Body of pancreas (tissue), 4 donors: ENCODE measurements at regions of chr12 and their contacts with region 1.

Region 1: DNA sequence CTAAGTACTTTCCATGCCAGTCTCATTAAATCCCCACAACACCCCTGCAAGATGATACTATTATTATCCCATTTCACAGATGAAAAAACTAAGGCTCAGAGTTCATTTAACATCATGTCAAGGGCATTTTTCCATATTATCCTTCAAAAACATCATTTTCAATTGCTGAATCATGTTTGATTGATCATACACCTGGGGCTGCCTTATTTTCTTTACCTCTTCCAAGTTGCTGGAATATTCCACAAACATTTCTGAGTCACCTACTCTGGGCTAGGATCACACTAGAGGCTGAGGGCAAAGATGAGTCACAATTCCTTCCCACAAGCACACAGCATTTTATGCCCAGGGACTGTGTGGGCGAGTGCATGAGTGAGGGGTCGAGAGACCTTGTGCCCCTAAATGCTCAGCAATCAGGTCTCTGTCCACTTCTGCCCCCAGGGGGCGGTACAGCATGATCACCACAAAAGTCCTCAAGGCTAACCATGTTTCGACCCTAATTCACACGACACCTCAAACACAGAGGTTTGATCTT is 14.1 kb upstream of the TMEM119 start:
- DNase-seq: no peak
- ATAC-seq: no peak
- H3K4me3 ChIP-seq: no peak overlapping the region
- H3K27ac ChIP-seq: no peak overlapping the region
- H3K4me1 ChIP-seq: no peaks in the 10 kb centered on the region
- H3K27me3 ChIP-seq: no peaks in the 10 kb centered on the region
- CTCF ChIP-seq: no peak
- POLR2A ChIP-seq: no peak

Region 2: DNA sequence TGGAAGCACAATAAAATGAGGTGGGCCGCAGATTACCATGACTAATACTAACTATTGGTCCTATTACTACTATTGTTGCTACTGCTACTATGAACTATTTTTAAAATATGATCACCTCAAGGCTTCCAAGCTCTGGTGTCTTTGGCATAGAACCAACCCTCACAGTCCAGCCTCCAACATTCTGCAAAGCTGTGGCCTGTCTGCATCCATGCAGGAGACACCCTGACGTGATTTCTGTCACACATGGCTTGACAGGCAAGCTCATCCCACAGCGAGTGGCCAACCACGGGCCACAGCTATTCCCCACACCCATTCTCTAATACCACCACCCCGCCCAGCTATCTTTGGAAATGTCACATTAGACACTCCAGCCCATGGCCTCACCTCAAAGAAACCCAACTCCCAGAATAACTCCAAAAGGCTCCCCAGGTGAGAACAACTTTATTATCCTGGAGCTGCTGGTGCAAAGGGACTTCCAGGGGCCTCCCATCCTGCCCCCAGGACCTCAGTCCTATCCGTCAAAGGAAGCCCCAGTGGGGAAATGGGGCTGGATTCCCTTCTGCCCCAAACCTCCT is 35.2 kb before region 1 on chr12:
- intact Hi-C with region 1: loop called (anchors 5 kb)
- DNase-seq: no peak
- ATAC-seq: no peak
- H3K4me3 ChIP-seq: no peak overlapping the region
- H3K27ac ChIP-seq: no peak overlapping the region
- H3K4me1 ChIP-seq: no peaks in the 10 kb centered on the region
- H3K27me3 ChIP-seq: no peaks in the 10 kb centered on the region
- CTCF ChIP-seq: no peak
- POLR2A ChIP-seq: no peak